GM10248 (cell line): ENCODE measurements at regions of chr16 and their contacts with region 1.

Region 1: GRCh38 chr16:15523092-15523541 is 88.7 kb downstream of the BMERB1 start:
- DNase-seq: no peak
- CTCF ChIP-seq: no peak

Region 2: DNA sequence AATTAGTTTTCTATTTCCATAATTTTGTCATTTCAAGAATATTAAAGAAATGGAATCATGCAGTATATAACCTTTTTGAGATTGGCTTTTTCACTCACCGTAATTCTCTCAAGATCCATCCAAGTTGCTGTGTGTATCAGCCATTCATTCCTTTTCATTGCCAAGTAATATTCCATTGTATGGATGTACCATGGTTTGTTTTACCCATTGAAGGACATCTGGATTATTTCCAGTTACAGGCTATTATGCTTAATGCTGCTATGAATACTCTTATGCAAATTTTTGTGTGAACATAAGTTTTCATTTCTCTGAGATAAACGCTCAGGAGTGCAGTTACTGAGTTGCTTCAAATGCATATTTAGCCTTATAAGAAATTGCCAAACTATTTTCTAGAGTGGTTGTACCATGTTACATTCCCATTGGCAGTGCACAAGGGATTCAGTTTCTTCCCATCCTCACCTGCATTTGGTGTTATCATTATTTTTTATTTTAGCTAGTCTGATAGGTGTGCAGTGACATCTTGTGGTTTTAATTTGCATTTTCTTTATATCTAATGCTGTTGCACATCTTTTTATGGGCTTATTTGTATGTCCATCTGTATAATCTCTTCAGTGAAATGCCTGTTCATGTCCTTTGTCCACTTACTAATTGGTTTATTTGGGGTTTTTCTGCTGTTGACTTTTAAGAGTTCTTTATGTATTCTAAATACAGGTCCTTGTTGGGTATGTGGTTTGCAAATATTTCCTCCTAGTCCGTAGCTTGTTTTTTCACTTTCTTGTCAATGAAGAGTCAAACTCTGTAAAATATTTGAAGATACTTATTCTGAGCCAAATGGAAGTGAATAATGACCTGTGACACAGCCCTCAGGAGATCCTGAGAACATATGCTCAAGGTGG is 56.0 kb before region 1 on chr16:
- CTCF ChIA-PET with region 1: no interaction called
- POLR2A ChIA-PET with region 1: no interaction called
- DNase-seq: no peak
- CTCF ChIP-seq: no peak

Region 3: DNA sequence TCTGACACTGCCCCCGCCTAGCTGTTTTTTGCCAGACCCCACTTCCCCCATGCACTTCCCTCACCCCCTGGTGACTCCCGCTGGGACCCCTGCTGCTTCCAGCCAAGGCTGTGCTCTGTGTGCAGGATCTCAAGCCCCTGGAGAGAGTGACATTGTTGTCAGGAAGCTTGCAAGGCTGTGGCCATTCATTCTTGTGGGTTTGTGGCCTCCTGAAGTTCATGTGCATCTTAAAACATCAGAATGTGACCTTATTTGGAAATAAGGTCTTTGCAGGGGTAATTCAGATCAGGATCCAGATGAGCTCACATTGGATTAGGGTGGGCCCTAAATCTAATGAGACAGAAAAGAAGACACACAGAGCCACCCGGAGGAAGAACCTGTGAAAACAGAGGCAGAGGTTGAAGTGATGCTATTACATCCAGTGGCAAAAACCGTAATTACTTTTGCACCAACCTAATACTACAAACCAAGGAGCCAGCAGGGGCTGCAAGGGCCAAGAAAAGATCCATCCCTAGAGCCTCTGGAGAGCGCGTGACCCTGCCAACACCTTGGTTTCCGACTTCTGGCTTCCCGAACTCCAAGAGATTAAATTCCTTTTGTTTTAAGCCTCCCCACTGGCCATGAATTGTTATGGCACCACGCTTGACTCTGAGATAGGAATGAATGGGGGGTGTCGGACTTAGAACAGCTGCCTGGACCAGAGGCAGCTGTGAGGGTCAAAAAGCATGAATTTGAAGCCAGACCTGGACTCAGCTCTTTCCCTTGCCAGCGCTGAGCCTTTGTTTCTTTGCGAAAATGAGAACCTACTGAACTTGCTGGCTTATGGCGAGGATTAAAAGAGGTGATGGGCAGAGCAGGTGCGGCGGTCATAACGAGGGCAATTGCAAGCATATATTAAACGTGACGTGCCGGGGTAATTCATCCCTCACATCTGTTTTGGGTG is 13.3 kb before region 1 on chr16:
- CTCF ChIA-PET with region 1: no interaction called
- POLR2A ChIA-PET with region 1: no interaction called
- DNase-seq: no peak
- CTCF ChIP-seq: no peak

Region 4: DNA sequence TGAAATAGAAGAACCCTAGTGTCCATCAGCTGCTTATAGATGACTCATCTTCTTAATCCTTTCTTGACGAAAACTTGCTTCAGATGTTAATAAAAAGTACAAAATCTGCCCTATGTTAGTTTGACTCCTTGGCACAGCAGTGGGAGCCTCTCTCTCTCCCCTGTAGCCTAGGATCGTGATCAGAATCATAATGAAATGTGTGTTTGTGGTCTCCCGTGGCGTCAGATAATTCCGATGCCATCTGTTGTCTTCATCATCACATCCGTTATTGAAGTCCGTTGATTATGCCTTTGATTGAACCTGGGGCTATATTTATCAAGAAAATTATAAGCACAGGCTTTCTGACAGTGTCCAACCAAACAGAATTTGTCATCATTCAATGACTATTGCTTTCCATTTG is 13.7 kb after region 1 on chr16:
- CTCF ChIA-PET with region 1: interaction called, 10 read pairs
- POLR2A ChIA-PET with region 1: no interaction called
- DNase-seq: no peak
- CTCF ChIP-seq: no peak

Region 5: GRCh38 chr16:15643048-15643945 is 120.2 kb after region 1 on chr16 and contains the start of gene MARF1:
- CTCF ChIA-PET with region 1: no interaction called
- POLR2A ChIA-PET with region 1: no interaction called
- DNase-seq: peak; percentile 90
- CTCF ChIP-seq: no peak